AG04450 (cell line): ENCODE measurements at regions of chr6 and their contacts with region 1.

Region 1: GRCh38 chr6:14037402-14038277 is 79.9 kb upstream of the CD83 start:
- DNase-seq: peak; percentile 52
- H3K4me3 ChIP-seq: no peak overlapping the region
- H3K27ac ChIP-seq: peak overlapping the region; percentile 83
- H3K27me3 ChIP-seq: no peaks in the 10 kb centered on the region
- CTCF ChIP-seq: no peak

Region 2: GRCh38 chr6:13924146-13924948 is 113.3 kb before region 1 on chr6:
- CTCF ChIA-PET with region 1: no interaction called
- POLR2A ChIA-PET with region 1: interaction called, 15 read pairs
- DNase-seq: no peak
- H3K4me3 ChIP-seq: peak overlapping the region; percentile 63
- H3K27ac ChIP-seq: peak overlapping the region; percentile 62
- H3K27me3 ChIP-seq: no peaks in the 10 kb centered on the region
- CTCF ChIP-seq: no peak